Activated naive CD8-positive, alpha-beta T cell treated with anti-CD3 and anti-CD28 coated beads, Interleukin-2, amount 10 ng/mL, durations not matched to agents 7 days and 5 days (primary cell): ENCODE measurements at regions of chr5 and their contacts with region 1.

Region 1: DNA sequence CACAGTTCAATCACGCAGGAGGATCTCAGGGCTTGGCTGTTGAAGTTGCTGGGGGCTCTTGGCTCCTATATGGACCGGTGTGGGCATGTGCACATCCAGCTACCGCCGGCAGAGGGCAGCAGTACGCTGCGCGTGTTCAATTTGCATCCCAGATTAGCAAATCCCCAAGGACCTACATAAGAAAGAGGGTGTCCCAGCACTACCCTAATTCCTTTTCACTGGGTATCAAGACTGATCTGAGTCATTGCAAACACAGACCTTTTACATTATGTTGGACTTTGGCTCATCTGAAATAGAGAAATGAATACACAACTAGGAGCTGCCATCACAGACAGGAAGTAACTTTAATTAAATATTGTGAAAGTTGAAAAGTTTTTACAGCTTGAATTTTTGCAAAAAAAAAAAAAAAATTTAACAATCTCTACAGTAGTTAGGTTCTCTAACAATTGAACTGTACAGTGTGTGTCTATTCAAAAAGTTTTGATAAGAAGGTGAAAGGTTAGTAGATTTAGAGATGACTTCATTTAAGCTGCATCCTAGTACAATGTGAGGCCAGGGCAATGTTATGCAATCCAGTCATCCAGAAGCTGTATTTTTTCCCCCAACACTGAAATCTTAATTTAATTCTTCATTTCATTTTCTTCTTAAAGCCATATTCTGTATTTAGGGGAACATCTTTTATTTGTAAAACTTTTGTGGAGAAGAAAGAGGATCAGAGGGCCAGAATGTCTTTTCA is 404.0 kb downstream of the EBF1 start:
- DNase-seq: peak; percentile 75
- ATAC-seq: peak; percentile 85
- H3K4me3 Mint-ChIP-seq: no peak overlapping the region
- H3K27ac Mint-ChIP-seq: no peak overlapping the region
- H3K4me1 Mint-ChIP-seq: peaks cover 2% of the 10 kb centered on the region
- H3K27me3 Mint-ChIP-seq: peaks cover 5% of the 10 kb centered on the region

Region 2: DNA sequence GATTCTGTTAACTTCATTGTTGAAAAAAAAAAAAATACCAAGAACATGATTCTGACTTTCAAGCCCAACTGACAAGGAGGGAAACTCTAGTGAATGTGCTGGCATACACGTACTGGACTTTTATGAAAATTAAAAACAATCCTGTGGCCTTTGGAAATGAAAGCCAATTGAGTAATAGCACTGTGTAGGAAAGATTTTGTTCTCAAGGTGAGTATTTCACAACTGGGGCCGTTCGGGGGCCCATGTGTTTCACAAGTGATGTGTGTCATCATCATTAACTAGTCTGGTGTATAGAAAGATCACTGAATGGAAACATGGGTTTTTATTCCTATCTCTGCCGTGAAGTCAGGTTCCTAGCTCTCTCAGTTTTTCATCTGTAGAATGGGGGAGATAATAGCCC is 231.8 kb before region 1 on chr5:
- POLR2A ChIA-PET with region 1: no interaction called
- DNase-seq: no peak
- ATAC-seq: no peak
- H3K4me3 Mint-ChIP-seq: no peak overlapping the region
- H3K27ac Mint-ChIP-seq: no peak overlapping the region
- H3K4me1 Mint-ChIP-seq: peaks cover 8% of the 10 kb centered on the region
- H3K27me3 Mint-ChIP-seq: no peaks in the 10 kb centered on the region

Region 3: GRCh38 chr5:159106569-159107282 is 411.0 kb after region 1 on chr5:
- POLR2A ChIA-PET with region 1: interaction called, 10 read pairs
- DNase-seq: peak; percentile 80
- ATAC-seq: peak; percentile 82
- H3K4me3 Mint-ChIP-seq: peak overlapping the region; percentile 74
- H3K27ac Mint-ChIP-seq: no peak overlapping the region
- H3K4me1 Mint-ChIP-seq: peaks cover 20% of the 10 kb centered on the region
- H3K27me3 Mint-ChIP-seq: peaks cover 80% of the 10 kb centered on the region